Left ventricle myocardium inferior (tissue), 1 donor: ENCODE measurements at regions of chr15 and their contacts with region 1.

Region 1: GRCh38 chr15:85494048-85494793 is 113.8 kb downstream of the AKAP13 start:
- DNase-seq: no peak
- H3K4me3 ChIP-seq: no peak overlapping the region
- H3K27ac ChIP-seq: peak overlapping the region; percentile 80
- H3K4me1 ChIP-seq: peaks cover 99% of the 10 kb centered on the region
- H3K27me3 ChIP-seq: no peaks in the 10 kb centered on the region
- CTCF ChIP-seq: no peak

Region 2: GRCh38 chr15:85582131-85583079 is 88.2 kb after region 1 on chr15:
- intact Hi-C with region 1: loop called (anchors 10 kb)
- DNase-seq: peak; percentile 55
- H3K4me3 ChIP-seq: peak overlapping the region; percentile 66
- H3K27ac ChIP-seq: peak overlapping the region; percentile 93
- H3K4me1 ChIP-seq: peaks cover 96% of the 10 kb centered on the region
- H3K27me3 ChIP-seq: no peaks in the 10 kb centered on the region
- CTCF ChIP-seq: no peak

Region 3: GRCh38 chr15:85689729-85690128 is 195.5 kb after region 1 on chr15:
- intact Hi-C with region 1: loop called (anchors 10 kb)
- DNase-seq: no peak
- H3K4me3 ChIP-seq: peak overlapping the region; percentile 49
- H3K27ac ChIP-seq: peak overlapping the region; percentile 77
- H3K4me1 ChIP-seq: peaks cover 97% of the 10 kb centered on the region
- H3K27me3 ChIP-seq: no peaks in the 10 kb centered on the region
- CTCF ChIP-seq: no peak